ENCODE measurements at regions of chr2 and their contacts with region 1.

Region 1: DNA sequence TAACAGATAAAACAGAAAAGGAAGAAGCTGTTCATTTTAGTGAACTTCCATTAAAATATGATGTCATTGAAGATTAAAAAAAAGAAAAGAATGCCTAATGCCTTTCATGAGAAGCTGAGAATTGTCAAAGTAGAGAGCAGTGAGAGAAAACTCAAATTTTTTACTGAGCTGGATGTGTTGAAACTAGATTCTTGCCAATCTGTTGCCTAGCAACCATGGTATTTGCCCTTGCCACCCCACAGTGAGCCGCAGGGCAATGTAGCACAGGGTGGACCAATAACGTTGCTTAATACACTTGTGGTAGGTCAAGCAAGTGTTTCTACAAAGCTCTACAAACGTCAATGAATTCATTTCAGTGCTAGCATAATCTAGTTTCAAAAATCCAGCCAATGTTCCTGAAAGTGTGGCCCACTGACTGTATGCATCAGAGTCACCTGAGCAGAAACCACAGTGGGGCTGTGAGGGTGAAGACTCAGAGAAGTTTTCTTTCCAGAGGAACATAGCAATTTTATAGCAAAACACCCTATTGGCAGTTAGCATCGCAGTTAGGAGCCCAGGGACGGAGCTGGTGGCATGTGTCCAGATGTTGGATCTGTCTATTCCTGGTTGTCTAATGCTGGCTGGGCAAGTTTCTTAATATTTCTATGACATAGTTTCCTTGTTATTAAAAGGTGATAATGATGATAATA is 132.2 kb downstream of the DOCK10 start:
- DNase-seq: peak; percentile 49
- H3K4me3 ChIP-seq: no peak overlapping the region
- H3K27ac ChIP-seq: peak overlapping the region; percentile 13
- H3K4me1 ChIP-seq: peaks cover 13% of the 10 kb centered on the region
- H3K27me3 ChIP-seq: no peaks in the 10 kb centered on the region
- CTCF ChIP-seq: no peak
- POLR2A ChIP-seq: no peak

Region 2: DNA sequence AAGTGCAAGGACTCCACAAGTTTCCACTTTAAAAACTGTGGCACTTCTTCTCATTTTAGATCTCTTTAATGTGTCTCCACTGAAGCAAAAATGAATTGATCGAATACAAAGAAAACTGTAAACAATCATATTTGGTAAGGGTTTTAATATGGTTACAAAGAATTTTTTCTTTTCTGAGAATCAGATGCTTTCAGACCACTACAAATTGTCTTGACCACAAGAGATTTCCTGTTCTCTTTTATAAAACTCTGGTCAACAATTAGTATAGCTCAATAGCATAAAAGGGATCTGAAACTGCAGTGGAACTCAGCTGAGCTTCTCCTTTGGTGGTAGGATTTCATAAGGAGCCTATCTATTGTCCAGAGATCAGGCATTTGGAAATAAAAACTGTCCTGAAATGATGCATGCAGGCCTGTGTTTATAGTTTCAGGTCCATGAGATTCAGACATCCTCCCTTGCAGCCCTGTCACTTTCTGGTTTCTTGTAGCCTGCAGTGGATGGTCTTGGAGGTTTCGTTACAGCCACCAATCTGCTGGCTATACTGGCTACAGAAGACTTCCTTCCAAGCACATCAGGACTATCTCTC is 12.2 kb after region 1 on chr2:
- CTCF ChIA-PET with region 1: interaction called, 9 read pairs
- POLR2A ChIA-PET with region 1: interaction called, 11 read pairs
- dilution Hi-C with region 1: no loop called
- intact Hi-C with region 1: no loop called
- DNase-seq: no peak
- H3K4me3 ChIP-seq: no peak overlapping the region
- H3K27ac ChIP-seq: no peak overlapping the region
- H3K4me1 ChIP-seq: peaks cover 20% of the 10 kb centered on the region
- H3K27me3 ChIP-seq: no peaks in the 10 kb centered on the region
- CTCF ChIP-seq: no peak
- POLR2A ChIP-seq: no peak

Measured in endothelial cell of umbilical vein (primary cell).